ENCODE measurements at regions of chr11 and their contacts with region 1.

Region 1: GRCh38 chr11:20127671-20128527 is 32.4 kb downstream of the DBX1 start:
- DNase-seq: peak; percentile 59 to 84 (median 77)
- H3K4me3 ChIP-seq: no peak overlapping the region
- H3K27ac ChIP-seq: no peak overlapping the region
- H3K4me1 ChIP-seq: peaks cover 0 to 11% (median 7%) of the 10 kb centered on the region in 4 experiments
- H3K27me3 ChIP-seq: peaks cover 0 to 27% (median 18%) of the 10 kb centered on the region in 5 experiments

Region 2: DNA sequence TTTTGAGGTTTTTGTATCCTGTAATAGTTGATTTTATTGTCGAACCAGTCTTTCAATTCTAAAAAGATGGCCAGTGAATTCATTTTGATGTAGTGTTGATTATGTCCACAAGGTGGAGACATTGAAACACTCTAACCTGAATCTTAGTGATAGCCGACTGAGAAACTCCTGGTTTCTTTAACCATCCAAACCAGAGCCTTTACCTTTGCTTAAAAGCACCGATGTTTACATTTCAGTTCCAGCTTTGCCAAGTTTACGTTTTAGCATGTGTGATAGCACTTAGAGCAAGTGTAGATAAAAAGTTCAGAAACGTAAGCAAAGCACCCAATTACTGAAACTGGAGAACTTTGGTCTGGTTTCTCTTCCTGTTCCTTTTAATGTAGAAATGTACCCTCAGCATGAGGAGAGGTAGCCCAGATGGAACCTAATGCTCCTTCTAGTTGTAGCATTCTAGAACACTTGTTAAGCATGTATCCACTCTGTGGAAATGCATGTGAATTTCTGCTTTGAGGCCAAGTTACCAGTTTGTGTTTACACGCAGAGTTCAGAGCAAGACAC is 176.3 kb before region 1 on chr11:
- CTCF ChIA-PET with region 1: interaction called, 38 read pairs
- POLR2A ChIA-PET with region 1: no interaction called
- DNase-seq: peak; percentile 39 to 66 (median 60)
- H3K4me3 ChIP-seq: peak overlapping the region in 5 of 7 experiments; percentile 33 to 63 (median 57)
- H3K27ac ChIP-seq: no peak overlapping the region
- H3K4me1 ChIP-seq: peaks cover 0 to 3% (median 0%) of the 10 kb centered on the region in 4 experiments
- H3K27me3 ChIP-seq: peaks cover 0 to 4% (median 0%) of the 10 kb centered on the region in 5 experiments

Region 3: DNA sequence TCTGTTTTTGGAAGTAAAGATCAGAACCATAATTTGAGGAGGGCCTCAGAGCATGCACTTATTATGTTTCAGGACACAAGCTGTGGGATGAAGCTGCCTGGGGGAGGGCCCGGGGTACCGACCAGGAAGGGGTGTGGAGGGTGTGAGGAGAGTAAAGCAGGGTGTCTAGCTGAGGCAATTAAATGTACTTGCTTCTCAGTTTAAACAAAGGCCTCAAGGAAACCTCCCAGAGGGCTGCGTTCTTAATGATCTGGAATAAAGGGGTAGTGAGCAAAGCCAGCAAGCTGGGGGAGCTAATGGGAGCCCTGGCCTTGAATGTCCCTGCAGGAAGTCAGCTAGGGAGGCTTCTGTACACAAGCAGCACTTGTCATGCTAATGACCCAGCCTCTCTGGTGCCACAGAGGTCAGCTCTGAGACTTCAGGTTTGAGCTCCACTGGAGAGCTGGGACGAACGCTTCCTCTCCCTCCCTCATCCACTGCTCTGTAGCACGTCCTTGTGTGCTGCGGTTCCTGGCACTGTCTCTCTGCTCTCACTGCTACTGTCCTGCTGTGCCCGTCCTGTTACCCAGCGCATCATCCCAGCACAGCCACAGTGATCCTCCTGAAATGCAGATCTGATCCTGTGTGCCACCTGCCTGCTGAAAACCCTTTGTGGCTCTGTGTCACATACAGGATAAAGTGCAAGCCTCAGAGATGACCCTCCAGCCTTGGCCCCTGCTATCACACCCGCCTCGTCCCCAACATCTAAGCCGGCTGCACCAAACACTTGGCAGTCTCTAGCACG is 127.4 kb before region 1 on chr11:
- CTCF ChIA-PET with region 1: no interaction called
- POLR2A ChIA-PET with region 1: no interaction called
- DNase-seq: no peak
- H3K4me3 ChIP-seq: no peak overlapping the region
- H3K27ac ChIP-seq: no peak overlapping the region
- H3K4me1 ChIP-seq: no peaks in the 10 kb centered on the region
- H3K27me3 ChIP-seq: no peaks in the 10 kb centered on the region

Region 4: GRCh38 chr11:20116825-20117224 is 11.1 kb before region 1 on chr11:
- CTCF ChIA-PET with region 1: interaction called, 30 read pairs
- POLR2A ChIA-PET with region 1: no interaction called
- DNase-seq: no peak
- H3K4me3 ChIP-seq: no peak overlapping the region
- H3K27ac ChIP-seq: no peak overlapping the region
- H3K4me1 ChIP-seq: peaks cover 0 to 12% (median 0%) of the 10 kb centered on the region in 4 experiments
- H3K27me3 ChIP-seq: peaks cover 0 to 5% (median 0%) of the 10 kb centered on the region in 5 experiments

Region 5: DNA sequence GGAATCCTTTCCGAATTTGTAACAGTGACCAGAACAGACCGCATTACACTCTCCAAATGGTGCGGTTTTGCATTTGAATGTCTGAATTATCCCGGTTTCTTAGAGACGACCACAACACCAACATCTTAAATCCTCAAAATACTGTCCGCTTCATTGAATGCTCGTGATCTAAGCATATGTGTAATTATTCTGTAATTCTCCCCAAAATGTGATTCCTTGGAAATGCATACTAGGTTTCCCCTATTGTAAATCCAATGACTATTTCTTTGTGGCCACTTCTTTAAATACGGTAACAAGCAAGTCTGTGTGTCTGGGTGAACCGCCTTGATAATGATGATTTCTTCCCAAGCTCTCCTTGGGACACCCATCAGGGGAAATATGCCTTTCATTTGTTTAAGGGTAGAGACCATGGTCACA is 119.7 kb after region 1 on chr11:
- CTCF ChIA-PET with region 1: no interaction called
- POLR2A ChIA-PET with region 1: no interaction called
- DNase-seq: no peak
- H3K4me3 ChIP-seq: no peak overlapping the region
- H3K27ac ChIP-seq: no peak overlapping the region
- H3K4me1 ChIP-seq: no peaks in the 10 kb centered on the region
- H3K27me3 ChIP-seq: peaks cover 0 to 17% (median 9%) of the 10 kb centered on the region in 5 experiments

Region 6: GRCh38 chr11:20261526-20261925 is 133.6 kb after region 1 on chr11:
- CTCF ChIA-PET with region 1: no interaction called
- POLR2A ChIA-PET with region 1: no interaction called
- DNase-seq: no peak
- H3K4me3 ChIP-seq: no peak overlapping the region
- H3K27ac ChIP-seq: no peak overlapping the region
- H3K4me1 ChIP-seq: no peaks in the 10 kb centered on the region
- H3K27me3 ChIP-seq: peaks cover 0 to 8% (median 2%) of the 10 kb centered on the region in 5 experiments

Region 7: DNA sequence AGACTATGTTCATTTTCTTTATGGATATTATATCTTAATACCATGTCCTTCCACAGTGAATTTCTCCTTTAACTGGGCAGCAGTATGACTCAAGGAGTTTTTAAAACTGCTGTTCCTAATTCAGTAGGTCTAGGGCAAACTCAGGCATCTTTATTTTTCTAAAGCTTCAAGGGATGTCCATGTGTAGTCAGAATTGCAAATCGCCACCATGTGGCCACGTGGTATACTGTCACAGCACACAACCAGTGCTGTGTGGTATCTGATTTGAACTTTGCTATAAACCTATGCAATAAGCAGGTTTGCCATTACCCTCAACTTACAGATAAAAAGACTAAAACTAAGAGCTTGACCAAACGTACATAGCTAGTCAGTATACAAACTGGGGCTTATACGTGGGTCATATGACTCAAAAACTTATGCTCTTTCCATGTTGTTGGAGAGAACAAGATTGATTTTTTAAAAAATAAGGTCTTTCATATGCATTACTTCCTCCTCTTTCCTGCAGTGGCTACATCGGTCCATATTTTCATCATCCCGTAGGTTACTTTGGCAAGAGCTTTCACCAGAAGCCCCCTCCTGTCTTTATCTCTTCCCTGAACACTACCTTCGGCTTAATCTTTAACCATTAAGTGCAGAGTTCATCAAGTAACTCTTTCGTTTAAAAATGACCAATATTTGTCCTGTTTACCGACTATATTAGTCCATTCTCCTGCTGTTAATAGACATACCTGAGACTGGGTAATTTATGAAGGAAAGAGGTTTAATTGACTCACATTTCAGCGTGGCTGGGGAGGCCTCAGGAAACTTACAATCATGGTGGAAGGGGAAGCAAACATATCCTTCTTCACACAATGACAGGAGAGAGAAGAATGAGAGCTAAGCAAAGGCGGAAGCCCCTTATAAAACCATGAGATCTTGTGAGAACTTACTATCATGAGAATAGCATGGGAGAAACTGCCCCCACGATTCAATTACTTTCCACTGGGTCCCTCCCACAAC is 227.6 kb after region 1 on chr11:
- CTCF ChIA-PET with region 1: interaction called, 44 read pairs
- POLR2A ChIA-PET with region 1: no interaction called
- DNase-seq: peak; percentile 30 to 68 (median 56)
- H3K4me3 ChIP-seq: no peak overlapping the region
- H3K27ac ChIP-seq: no peak overlapping the region
- H3K4me1 ChIP-seq: peaks cover 0 to 2% (median under 1%) of the 10 kb centered on the region in 4 experiments
- H3K27me3 ChIP-seq: peaks cover 0 to 2% (median 0%) of the 10 kb centered on the region in 5 experiments